CD4-positive, alpha-beta memory T cell (primary cell): ENCODE measurements at regions of chr12 and their contacts with region 1.

Region 1: GRCh38 chr12:6335451-6336078 is 6.3 kb downstream of the TNFRSF1A start:
- DNase-seq: peak; percentile 80 to 90 (median 82)
- H3K4me3 ChIP-seq: peak overlapping the region; percentile 61 to 64
- H3K4me3 Mint-ChIP-seq: no peak overlapping the region
- H3K27ac ChIP-seq: peak overlapping the region; percentile 92
- H3K27ac Mint-ChIP-seq: peak overlapping the region in 1 of 7 donors; percentile 96
- H3K4me1 ChIP-seq: peaks cover 83% of the 10 kb centered on the region
- H3K4me1 Mint-ChIP-seq: peaks cover 7 to 38% (median 32%) of the 10 kb centered on the region in 4 donors
- H3K27me3 ChIP-seq: no peaks in the 10 kb centered on the region
- H3K27me3 Mint-ChIP-seq: no peaks in the 10 kb centered on the region

Region 2: DNA sequence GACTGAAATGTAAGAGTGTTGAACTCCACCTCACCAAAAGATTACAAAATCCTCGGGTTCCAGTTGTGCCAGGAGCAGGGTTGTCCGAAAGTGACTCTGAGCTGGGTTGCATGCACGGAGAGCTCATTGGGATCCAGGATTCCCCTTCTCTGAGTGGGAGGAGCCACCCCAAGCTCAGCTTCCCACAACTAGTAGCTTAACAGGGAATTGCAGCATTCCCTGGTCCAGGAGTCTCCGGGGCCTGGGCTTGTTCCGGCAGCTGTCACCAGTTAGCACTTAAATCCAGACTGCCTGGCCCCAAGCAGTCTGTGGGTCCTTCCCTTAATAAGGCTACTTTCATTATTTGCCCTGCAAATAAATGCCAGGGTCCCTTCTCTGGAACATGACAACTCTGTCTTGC is 85.2 kb before region 1 on chr12:
- CTCF ChIA-PET with region 1: no interaction called
- POLR2A ChIA-PET with region 1: no interaction called
- intact Hi-C with region 1: no loop called
- DNase-seq: no peak
- H3K4me3 ChIP-seq: no peak overlapping the region
- H3K4me3 Mint-ChIP-seq: no peak overlapping the region
- H3K27ac ChIP-seq: no peak overlapping the region
- H3K27ac Mint-ChIP-seq: no peak overlapping the region
- H3K4me1 ChIP-seq: no peaks in the 10 kb centered on the region
- H3K4me1 Mint-ChIP-seq: no peaks in the 10 kb centered on the region
- H3K27me3 ChIP-seq: no peaks in the 10 kb centered on the region
- H3K27me3 Mint-ChIP-seq: peaks cover 9 to 14% of the 10 kb centered on the region in 2 donors

Region 3: DNA sequence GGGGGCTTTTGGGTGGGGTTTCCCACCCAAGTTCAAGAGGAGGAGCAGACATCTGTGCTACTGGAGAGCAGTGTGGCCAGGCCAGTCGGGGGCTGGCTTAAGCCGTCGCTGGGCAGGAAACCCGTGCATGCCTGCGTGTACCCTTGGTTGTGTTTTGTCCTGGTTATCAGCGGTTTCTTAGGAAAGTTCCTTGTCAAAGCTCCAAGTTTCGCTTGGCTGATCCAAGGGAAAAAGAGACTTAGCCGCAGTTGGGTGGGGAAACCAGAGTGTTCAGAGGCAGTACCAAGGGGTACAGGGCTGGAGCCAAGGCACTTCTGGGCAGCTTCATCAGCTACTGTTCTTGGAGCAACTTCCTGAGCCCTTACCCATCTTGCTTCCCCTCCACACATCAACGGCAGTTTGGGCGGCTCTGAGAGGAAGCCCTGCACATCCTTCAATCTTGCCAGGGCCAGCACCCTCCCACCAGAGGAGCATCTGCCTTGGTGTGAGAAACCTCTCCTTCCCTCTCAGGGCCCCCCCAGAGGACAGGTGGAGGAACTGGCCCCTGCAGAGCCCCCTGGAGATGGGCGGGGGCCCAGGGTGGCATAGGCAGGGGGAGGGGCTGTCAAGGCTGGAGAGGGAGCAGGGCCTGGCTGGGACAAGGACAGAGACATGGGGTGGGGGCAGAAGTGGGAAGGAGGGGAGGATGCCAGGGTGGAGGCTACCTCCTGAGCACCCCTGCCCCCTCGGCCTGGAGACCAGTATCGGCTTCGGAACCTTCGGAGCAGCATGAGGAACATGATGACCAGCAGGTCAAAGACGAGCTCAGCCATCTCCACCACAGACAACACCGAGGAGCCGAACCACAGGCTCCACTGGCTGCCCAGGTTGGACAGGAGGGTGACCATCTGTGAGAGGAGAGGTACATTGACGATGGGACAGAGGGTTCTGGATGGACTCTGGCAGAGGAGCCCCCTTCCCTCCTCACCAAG is 12.1 kb after region 1 on chr12:
- CTCF ChIA-PET with region 1: interaction called, 37 read pairs
- POLR2A ChIA-PET with region 1: interaction called, 39 read pairs
- intact Hi-C with region 1: no loop called
- DNase-seq: no peak
- H3K4me3 ChIP-seq: no peak overlapping the region
- H3K4me3 Mint-ChIP-seq: no peak overlapping the region
- H3K27ac ChIP-seq: no peak overlapping the region
- H3K27ac Mint-ChIP-seq: no peak overlapping the region
- H3K4me1 ChIP-seq: peaks cover 41% of the 10 kb centered on the region
- H3K4me1 Mint-ChIP-seq: peaks cover 24 to 42% (median 33%) of the 10 kb centered on the region in 4 donors
- H3K27me3 ChIP-seq: no peaks in the 10 kb centered on the region
- H3K27me3 Mint-ChIP-seq: no peaks in the 10 kb centered on the region

Region 4: DNA sequence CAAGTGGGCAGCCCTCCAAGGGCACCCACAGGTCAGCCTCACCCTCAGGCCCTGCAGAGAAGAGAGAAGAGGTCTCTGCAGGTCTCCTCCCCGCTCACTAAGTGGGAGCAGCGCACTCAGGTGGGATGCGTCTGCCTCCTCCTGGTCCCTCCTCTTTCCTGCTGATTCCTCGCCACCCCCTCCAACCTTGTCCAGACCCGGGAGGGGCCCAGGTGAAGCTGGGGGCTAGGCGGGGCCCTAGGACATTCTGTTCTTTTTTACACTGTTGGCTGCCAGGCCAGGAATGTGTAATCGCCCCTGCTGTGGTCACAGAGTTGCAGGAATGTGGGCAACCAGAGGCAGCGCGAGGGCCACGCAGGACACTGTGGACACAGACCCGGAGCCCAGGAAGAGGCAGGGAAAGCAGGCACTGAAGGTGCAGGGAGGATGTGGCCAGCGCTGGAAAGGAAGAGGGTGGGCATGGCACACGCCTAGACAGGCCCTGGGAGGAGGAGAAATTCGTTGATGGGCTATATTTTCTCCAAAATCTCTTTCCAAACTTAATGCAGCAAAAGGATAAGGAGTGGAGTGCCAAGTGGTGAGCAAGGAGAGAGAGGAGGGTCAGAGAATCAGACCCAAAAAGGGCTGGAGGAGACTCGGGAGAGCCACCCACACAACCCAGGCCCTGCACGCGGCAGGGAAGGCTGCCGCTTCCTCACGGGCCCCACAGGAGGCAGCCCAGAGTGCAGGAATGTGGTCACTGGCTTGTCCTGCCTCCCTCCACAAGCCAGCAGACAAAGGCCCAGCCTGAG is 40.7 kb after region 1 on chr12:
- CTCF ChIA-PET with region 1: interaction called, 268 read pairs
- POLR2A ChIA-PET with region 1: interaction called, 9 read pairs
- intact Hi-C with region 1: no loop called
- DNase-seq: no peak
- H3K4me3 ChIP-seq: no peak overlapping the region
- H3K4me3 Mint-ChIP-seq: peak overlapping the region in 7 of 8 donors; percentile 29 to 76 (median 71)
- H3K27ac ChIP-seq: no peak overlapping the region
- H3K27ac Mint-ChIP-seq: peak overlapping the region in 5 of 7 donors; percentile 19 to 81 (median 55)
- H3K4me1 ChIP-seq: peaks cover 29% of the 10 kb centered on the region
- H3K4me1 Mint-ChIP-seq: peaks cover 8 to 40% (median 28%) of the 10 kb centered on the region in 4 donors
- H3K27me3 ChIP-seq: no peaks in the 10 kb centered on the region
- H3K27me3 Mint-ChIP-seq: peaks cover 0 to 3% of the 10 kb centered on the region in 2 donors

Region 5: DNA sequence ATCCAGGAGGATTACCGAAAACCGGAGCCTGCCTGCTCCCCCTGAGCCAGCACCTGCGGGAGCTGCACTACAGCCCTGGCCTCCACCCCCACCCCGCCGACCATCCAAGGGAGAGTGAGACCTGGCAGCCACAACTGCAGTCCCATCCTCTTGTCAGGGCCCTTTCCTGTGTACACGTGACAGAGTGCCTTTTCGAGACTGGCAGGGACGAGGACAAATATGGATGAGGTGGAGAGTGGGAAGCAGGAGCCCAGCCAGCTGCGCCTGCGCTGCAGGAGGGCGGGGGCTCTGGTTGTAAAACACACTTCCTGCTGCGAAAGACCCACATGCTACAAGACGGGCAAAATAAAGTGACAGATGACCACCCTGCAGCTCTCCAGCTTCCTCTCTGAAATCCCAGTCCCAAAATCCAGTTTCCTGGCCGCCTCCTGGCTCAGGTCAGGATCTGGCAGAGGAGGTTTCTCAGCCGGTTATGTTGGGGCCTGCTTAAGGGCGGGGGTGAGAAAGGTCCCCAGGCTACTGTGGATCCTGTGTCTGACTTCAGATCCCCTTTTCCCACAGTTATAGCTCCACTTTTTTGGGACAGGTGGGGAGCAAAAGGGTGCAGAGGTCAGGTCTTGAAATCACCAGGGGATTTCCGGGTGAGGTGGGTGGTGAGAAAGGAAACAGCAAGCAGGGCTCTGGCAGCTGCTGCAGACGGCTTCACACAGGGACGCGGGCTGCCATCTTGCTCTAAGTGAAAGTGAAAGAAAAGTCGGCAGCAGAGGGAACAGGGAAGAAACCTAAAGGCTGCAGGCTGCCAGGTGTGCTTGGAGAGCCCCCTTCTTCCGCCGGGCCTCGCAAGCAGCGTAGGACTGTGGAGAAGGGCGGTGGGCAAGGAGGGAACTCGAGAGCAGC is 116.0 kb after region 1 on chr12 and contains the start of gene TAPBPL:
- CTCF ChIA-PET with region 1: interaction called, 5 read pairs
- POLR2A ChIA-PET with region 1: interaction called, 33 read pairs
- intact Hi-C with region 1: no loop called
- DNase-seq: peak; percentile 85 to 94 (median 86)
- H3K4me3 ChIP-seq: peak within 1 kb of the TSS; percentile 80
- H3K4me3 Mint-ChIP-seq: peak within 1 kb of the TSS; percentile 96 to 100 (median 98)
- H3K27ac ChIP-seq: peak within 1 kb of the TSS; percentile 99
- H3K27ac Mint-ChIP-seq: peak within 1 kb of the TSS; percentile 95 to 99 (median 99)
- H3K4me1 ChIP-seq: peaks cover 68% of the 10 kb centered on the region
- H3K4me1 Mint-ChIP-seq: peaks cover 45 to 79% (median 64%) of the 10 kb centered on the region in 4 donors
- H3K27me3 ChIP-seq: no peaks in the 10 kb centered on the region
- H3K27me3 Mint-ChIP-seq: no peaks in the 10 kb centered on the region
- total RNA-seq, gene TAPBPL: 66.4 to 66.9 TPM

Region 6: DNA sequence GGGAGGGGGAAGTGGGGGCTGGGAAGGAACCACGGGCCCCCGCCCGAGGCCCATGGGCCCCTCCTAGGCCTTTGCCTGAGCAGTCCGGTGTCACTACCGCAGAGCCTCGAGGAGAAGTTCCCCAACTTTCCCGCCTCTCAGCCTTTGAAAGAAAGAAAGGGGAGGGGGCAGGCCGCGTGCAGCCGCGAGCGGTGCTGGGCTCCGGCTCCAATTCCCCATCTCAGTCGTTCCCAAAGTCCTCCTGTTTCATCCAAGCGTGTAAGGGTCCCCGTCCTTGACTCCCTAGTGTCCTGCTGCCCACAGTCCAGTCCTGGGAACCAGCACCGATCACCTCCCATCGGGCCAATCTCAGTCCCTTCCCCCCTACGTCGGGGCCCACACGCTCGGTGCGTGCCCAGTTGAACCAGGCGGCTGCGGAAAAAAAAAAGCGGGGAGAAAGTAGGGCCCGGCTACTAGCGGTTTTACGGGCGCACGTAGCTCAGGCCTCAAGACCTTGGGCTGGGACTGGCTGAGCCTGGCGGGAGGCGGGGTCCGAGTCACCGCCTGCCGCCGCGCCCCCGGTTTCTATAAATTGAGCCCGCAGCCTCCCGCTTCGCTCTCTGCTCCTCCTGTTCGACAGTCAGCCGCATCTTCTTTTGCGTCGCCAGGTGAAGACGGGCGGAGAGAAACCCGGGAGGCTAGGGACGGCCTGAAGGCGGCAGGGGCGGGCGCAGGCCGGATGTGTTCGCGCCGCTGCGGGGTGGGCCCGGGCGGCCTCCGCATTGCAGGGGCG is 198.5 kb after region 1 on chr12 and contains the start of gene GAPDH:
- CTCF ChIA-PET with region 1: interaction called, 30 read pairs
- POLR2A ChIA-PET with region 1: interaction called, 43 read pairs
- intact Hi-C with region 1: loop called (anchors 1 kb)
- DNase-seq: peak; percentile 85 to 89 (median 88)
- H3K4me3 ChIP-seq: peak within 1 kb of the TSS; percentile 79 to 81
- H3K4me3 Mint-ChIP-seq: peak within 1 kb of the TSS; percentile 90 to 98 (median 94)
- H3K27ac ChIP-seq: peak within 1 kb of the TSS; percentile 86
- H3K27ac Mint-ChIP-seq: peak within 1 kb of the TSS; percentile 88 to 99 (median 99)
- H3K4me1 ChIP-seq: peaks cover 62% of the 10 kb centered on the region
- H3K4me1 Mint-ChIP-seq: peaks cover 30 to 67% (median 45%) of the 10 kb centered on the region in 4 donors
- H3K27me3 ChIP-seq: no peaks in the 10 kb centered on the region
- H3K27me3 Mint-ChIP-seq: no peaks in the 10 kb centered on the region
- total RNA-seq, gene GAPDH: 474 to 495 TPM